Spleen (tissue), 13 donors: ENCODE measurements at regions of chr9 and their contacts with region 1.

Region 1: DNA sequence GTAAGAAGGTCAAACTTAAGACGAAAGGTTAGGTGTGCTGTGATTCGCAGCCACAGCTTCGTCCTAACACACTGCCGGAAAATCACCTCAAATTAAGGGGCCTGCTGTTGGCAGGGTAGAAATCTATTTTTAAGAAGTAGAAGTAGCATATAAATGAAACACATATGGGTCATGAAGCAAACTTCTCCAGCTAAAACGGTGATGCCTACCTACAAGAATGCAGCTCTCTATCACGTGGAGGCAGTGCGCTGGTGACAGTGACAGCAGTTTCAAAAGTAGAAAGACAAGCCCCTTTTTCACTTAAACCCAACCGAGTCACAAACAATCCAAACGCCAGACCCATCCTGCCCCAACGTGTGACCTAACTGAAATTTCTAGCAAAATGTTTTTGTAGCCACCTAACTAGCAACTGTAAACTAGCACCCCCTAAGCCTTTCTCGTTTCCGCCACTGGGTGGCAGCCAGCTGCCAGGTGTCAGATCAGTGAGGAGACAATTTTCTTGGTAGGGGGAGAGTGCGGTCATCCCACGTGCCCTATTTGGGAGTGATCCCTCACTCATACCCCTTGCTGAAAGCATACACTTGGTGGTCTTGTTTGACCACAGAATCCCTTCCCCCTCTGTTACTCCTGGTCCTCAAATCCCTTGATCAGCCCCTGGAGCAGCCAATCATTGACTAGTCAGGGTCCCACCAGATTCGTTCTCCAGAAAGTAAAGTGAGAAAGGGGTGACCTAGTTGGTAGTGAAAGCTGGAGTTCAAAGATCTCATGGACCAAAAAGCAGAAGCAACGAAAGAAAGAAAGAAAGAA is 71.8 kb upstream of the MAMDC2 start:
- DNase-seq: peak; percentile 81
- H3K4me3 ChIP-seq: no peak overlapping the region
- H3K27ac ChIP-seq: no peak overlapping the region
- H3K4me1 ChIP-seq: no peaks in the 10 kb centered on the region
- H3K27me3 ChIP-seq: peaks cover 0 to 8% (median 0%) of the 10 kb centered on the region in 7 donors
- CTCF ChIP-seq: peak; percentile 18 to 78 (median 65)
- POLR2A ChIP-seq: no peak

Region 2: GRCh38 chr9:70111042-70111602 is 139.3 kb after region 1 on chr9:
- intact Hi-C with region 1: loop called (anchors 5 kb)
- DNase-seq: peak; percentile 85
- H3K4me3 ChIP-seq: no peak overlapping the region
- H3K27ac ChIP-seq: no peak overlapping the region
- H3K4me1 ChIP-seq: peaks cover 0 to 16% (median 6%) of the 10 kb centered on the region in 6 donors
- H3K27me3 ChIP-seq: peaks cover 0 to 18% (median 0%) of the 10 kb centered on the region in 7 donors
- CTCF ChIP-seq: peak; percentile 36 to 85 (median 75)
- POLR2A ChIP-seq: no peak

Region 3: GRCh38 chr9:70602321-70603019 is 630.6 kb after region 1 on chr9:
- intact Hi-C with region 1: loop called (anchors 10 kb)
- DNase-seq: no peak
- H3K4me3 ChIP-seq: no peak overlapping the region
- H3K27ac ChIP-seq: peak overlapping the region in 7 of 8 donors; percentile 43 to 78 (median 68)
- H3K4me1 ChIP-seq: peaks cover 0 to 18% (median 7%) of the 10 kb centered on the region in 6 donors
- H3K27me3 ChIP-seq: no peaks in the 10 kb centered on the region
- CTCF ChIP-seq: peak in 10 of 11 experiments; percentile 39 to 84 (median 68)
- POLR2A ChIP-seq: no peak